ENCODE measurements at regions of chr4 and their contacts with region 1.

Region 1: GRCh38 chr4:99088481-99089365 is at the start of gene ADH5:
- DNase-seq: peak; percentile 88 to 94 (median 93)
- ATAC-seq: peak; percentile 96
- H3K4me3 ChIP-seq: peak within 1 kb of the TSS; percentile 59 to 91
- H3K4me3 Mint-ChIP-seq: peak within 1 kb of the TSS; percentile 99
- H3K27ac ChIP-seq: peak within 1 kb of the TSS; percentile 76 to 86
- H3K27ac Mint-ChIP-seq: peak within 1 kb of the TSS; percentile 99
- H3K4me1 ChIP-seq: peaks cover 23% of the 10 kb centered on the region
- H3K4me1 Mint-ChIP-seq: peaks cover 58% of the 10 kb centered on the region
- H3K27me3 ChIP-seq: no peaks in the 10 kb centered on the region
- H3K27me3 Mint-ChIP-seq: no peaks in the 10 kb centered on the region
- CTCF ChIP-seq: no peak
- total RNA-seq, gene ADH5: 50.0 to 51.7 TPM

Region 2: DNA sequence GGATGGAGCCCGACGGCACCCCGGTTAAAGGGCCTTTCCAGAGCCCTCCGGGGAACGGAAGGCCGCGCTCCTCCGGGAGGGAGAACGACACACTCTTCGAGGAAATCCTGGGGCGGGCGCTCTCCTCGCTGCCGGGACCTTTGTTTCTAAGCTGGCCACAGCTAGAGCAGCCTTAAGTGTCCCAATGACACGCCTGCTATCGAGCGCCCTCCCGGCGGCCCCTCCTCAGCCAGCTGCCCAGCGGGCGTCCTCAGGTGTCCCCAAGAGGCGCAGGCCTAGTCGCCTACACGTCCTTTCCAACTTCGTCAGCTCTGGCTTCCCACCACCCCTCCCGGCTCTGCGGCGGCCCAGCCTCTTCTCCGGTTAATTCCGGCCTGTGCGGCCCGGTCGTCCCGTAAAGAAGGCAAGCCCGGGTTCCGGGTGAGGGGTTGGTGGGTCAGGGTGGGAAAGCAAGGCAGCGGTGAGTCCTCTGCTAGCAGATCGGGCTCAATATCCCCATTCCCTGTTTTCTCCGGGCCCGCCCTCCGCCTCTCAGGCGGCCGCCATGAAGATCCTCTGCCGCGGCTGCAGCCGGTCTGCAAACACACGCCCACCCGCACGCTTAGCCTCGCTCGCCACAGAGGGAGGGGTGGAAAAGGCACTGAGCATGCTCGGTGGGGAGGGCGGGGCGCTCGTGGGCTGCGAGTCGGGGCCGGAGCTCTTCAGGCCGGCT is 828.0 kb before region 1 on chr4:
- CTCF ChIA-PET with region 1: no interaction called
- POLR2A ChIA-PET with region 1: no interaction called
- intact Hi-C with region 1: loop called (anchors 2 to 5 kb)
- DNase-seq: peak; percentile 67 to 95 (median 88)
- ATAC-seq: peak; percentile 72
- H3K4me3 ChIP-seq: peak overlapping the region; percentile 89 to 96
- H3K4me3 Mint-ChIP-seq: peak overlapping the region; percentile 94
- H3K27ac ChIP-seq: peak overlapping the region; percentile 77 to 79
- H3K27ac Mint-ChIP-seq: peak overlapping the region; percentile 95
- H3K4me1 ChIP-seq: peaks cover 27% of the 10 kb centered on the region
- H3K4me1 Mint-ChIP-seq: peaks cover 51% of the 10 kb centered on the region
- H3K27me3 ChIP-seq: no peaks in the 10 kb centered on the region
- H3K27me3 Mint-ChIP-seq: no peaks in the 10 kb centered on the region
- CTCF ChIP-seq: no peak

Region 3: DNA sequence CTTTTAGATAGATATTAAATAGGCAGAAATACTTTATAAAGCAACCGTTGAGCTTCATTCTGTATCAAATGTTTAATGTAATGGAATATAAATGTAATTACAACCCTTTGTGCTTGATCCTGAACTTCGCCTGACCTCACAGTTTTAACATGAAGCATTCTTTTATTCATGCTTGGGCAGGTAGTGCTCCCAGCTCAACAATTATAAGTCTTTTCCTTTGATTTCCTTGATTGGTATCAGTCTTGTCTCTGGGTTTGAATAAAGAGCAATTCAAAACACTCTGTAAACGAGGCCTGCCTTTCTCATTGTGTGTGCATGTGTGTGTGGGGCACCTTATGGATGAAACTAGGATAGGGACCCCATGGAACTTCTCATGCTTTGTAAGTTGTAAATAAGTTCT is 86.4 kb before region 1 on chr4:
- CTCF ChIA-PET with region 1: no interaction called
- POLR2A ChIA-PET with region 1: interaction called, 52 read pairs
- intact Hi-C with region 1: loop called in 1 of 2 experiments (anchors 2 kb)
- DNase-seq: no peak
- ATAC-seq: no peak
- H3K4me3 ChIP-seq: no peak overlapping the region
- H3K4me3 Mint-ChIP-seq: no peak overlapping the region
- H3K27ac ChIP-seq: no peak overlapping the region
- H3K27ac Mint-ChIP-seq: no peak overlapping the region
- H3K4me1 ChIP-seq: peaks cover 4% of the 10 kb centered on the region
- H3K4me1 Mint-ChIP-seq: peaks cover 76% of the 10 kb centered on the region
- H3K27me3 ChIP-seq: no peaks in the 10 kb centered on the region
- H3K27me3 Mint-ChIP-seq: no peaks in the 10 kb centered on the region
- CTCF ChIP-seq: no peak

Region 4: GRCh38 chr4:99043346-99043745 is 45.4 kb before region 1 on chr4:
- CTCF ChIA-PET with region 1: interaction called, 4 read pairs
- POLR2A ChIA-PET with region 1: interaction called, 6 read pairs
- intact Hi-C with region 1: loop called in 1 of 2 experiments (anchors 5 kb)
- DNase-seq: peak in 2 of 9 experiments; percentile 54 to 75
- ATAC-seq: peak; percentile 96
- H3K4me3 ChIP-seq: no peak overlapping the region
- H3K4me3 Mint-ChIP-seq: peak overlapping the region; percentile 20
- H3K27ac ChIP-seq: peak overlapping the region; percentile 54 to 85
- H3K27ac Mint-ChIP-seq: peak overlapping the region; percentile 84
- H3K4me1 ChIP-seq: peaks cover 20% of the 10 kb centered on the region
- H3K4me1 Mint-ChIP-seq: peaks cover 19% of the 10 kb centered on the region
- H3K27me3 ChIP-seq: no peaks in the 10 kb centered on the region
- H3K27me3 Mint-ChIP-seq: no peaks in the 10 kb centered on the region
- CTCF ChIP-seq: no peak

Region 5: DNA sequence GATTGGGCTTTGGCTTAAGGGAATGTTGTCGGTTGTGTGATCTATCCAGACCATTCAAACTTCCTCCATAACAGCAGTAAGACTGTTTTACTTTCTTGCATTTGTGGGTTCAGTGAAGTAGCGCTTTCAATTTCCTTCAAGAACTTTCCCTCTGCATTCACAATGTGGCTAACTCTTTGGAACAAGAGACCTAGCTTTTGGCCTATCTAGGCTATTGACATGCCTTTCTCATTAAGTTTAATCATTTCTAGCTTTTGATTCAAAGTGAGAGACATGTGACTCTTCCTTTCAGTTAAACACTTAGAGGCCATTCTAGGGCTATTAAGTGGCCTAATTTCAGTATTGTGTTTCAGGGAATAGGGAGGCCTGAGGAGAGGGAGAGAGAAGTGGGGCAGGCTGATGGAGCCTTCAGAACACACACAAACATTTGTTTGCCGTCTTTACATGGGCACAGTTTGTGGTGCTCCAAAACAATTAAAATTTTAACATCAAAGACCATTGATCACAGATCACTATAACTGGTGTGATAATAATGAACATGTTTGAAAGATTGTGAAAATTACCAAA is 34.2 kb before region 1 on chr4:
- CTCF ChIA-PET with region 1: interaction called, 8 read pairs
- POLR2A ChIA-PET with region 1: interaction called, 17 read pairs
- intact Hi-C with region 1: loop called in 1 of 2 experiments (anchors 2 kb)
- DNase-seq: no peak
- ATAC-seq: no peak
- H3K4me3 ChIP-seq: no peak overlapping the region
- H3K4me3 Mint-ChIP-seq: no peak overlapping the region
- H3K27ac ChIP-seq: peak overlapping the region in 1 of 2 experiments; percentile 15
- H3K27ac Mint-ChIP-seq: peak overlapping the region; percentile 42
- H3K4me1 ChIP-seq: peaks cover 3% of the 10 kb centered on the region
- H3K4me1 Mint-ChIP-seq: peaks cover 7% of the 10 kb centered on the region
- H3K27me3 ChIP-seq: no peaks in the 10 kb centered on the region
- H3K27me3 Mint-ChIP-seq: no peaks in the 10 kb centered on the region
- CTCF ChIP-seq: no peak

Region 6: DNA sequence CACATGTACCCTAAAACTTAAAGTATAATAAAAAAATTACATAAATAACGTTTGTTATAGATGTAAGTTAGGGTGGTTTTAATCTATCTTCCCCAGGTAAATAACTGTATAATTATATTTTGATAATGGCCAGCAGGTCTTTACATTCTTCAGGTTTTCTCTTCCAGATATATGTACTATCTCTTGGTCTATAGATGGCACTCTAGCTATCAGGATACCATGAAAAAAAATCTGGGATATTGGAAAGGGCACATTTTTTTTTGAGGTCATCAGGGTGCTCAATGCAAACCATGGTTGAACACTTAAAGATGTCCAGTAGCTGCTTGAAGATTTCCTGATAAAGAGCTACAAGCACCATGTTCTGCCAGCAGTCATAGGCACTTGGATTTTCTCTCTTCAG is 71.0 kb after region 1 on chr4:
- CTCF ChIA-PET with region 1: no interaction called
- POLR2A ChIA-PET with region 1: no interaction called
- intact Hi-C with region 1: no loop called
- DNase-seq: no peak
- ATAC-seq: no peak
- H3K4me3 ChIP-seq: no peak overlapping the region
- H3K4me3 Mint-ChIP-seq: no peak overlapping the region
- H3K27ac ChIP-seq: no peak overlapping the region
- H3K27ac Mint-ChIP-seq: no peak overlapping the region
- H3K4me1 ChIP-seq: no peaks in the 10 kb centered on the region
- H3K4me1 Mint-ChIP-seq: no peaks in the 10 kb centered on the region
- H3K27me3 ChIP-seq: no peaks in the 10 kb centered on the region
- H3K27me3 Mint-ChIP-seq: no peaks in the 10 kb centered on the region
- CTCF ChIP-seq: no peak

Region 7: GRCh38 chr4:99894161-99894997 is 805.7 kb after region 1 on chr4 and contains the start of gene LAMTOR3:
- CTCF ChIA-PET with region 1: no interaction called
- POLR2A ChIA-PET with region 1: no interaction called
- intact Hi-C with region 1: loop called (anchors 1 to 5 kb)
- DNase-seq: peak; percentile 80 to 97 (median 88)
- ATAC-seq: peak; percentile 94
- H3K4me3 ChIP-seq: peak within 1 kb of the TSS; percentile 68 to 80
- H3K4me3 Mint-ChIP-seq: peak within 1 kb of the TSS; percentile 97
- H3K27ac ChIP-seq: peak within 1 kb of the TSS; percentile 77 to 87
- H3K27ac Mint-ChIP-seq: peak within 1 kb of the TSS; percentile 98
- H3K4me1 ChIP-seq: peaks cover 30% of the 10 kb centered on the region
- H3K4me1 Mint-ChIP-seq: peaks cover 49% of the 10 kb centered on the region
- H3K27me3 ChIP-seq: no peaks in the 10 kb centered on the region
- H3K27me3 Mint-ChIP-seq: no peaks in the 10 kb centered on the region
- CTCF ChIP-seq: no peak
- total RNA-seq, gene LAMTOR3: 29.3 to 32.4 TPM

Region 8: DNA sequence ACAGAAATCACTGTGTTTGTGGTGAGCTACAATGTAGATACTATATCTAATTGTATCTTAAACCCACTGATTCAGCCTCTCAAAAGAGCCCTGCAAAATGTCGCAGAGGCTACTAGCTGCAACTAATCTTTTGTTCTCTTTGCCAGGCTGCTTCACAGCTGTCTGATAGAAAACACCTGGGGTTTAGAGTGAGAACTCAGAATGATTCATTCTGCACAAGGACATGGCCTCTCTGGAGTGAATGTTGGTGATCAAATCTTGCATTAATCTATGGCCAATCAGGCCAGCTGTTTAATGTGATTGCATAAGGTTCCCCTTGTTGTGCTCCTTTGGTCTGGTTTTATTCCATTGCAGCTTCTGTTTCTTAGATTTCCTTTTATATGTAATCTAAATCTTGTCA is 1328.8 kb after region 1 on chr4:
- CTCF ChIA-PET with region 1: no interaction called
- POLR2A ChIA-PET with region 1: no interaction called
- intact Hi-C with region 1: no loop called
- DNase-seq: no peak
- ATAC-seq: no peak
- H3K4me3 ChIP-seq: no peak overlapping the region
- H3K4me3 Mint-ChIP-seq: no peak overlapping the region
- H3K27ac ChIP-seq: no peak overlapping the region
- H3K27ac Mint-ChIP-seq: no peak overlapping the region
- H3K4me1 ChIP-seq: no peaks in the 10 kb centered on the region
- H3K4me1 Mint-ChIP-seq: no peaks in the 10 kb centered on the region
- H3K27me3 ChIP-seq: no peaks in the 10 kb centered on the region
- H3K27me3 Mint-ChIP-seq: no peaks in the 10 kb centered on the region
- CTCF ChIP-seq: no peak

Measured in CD8-positive, alpha-beta T cell (primary cell).